HepG2 (cell line): ENCODE measurements at regions of chr15 and their contacts with region 1.

Region 1: GRCh38 chr15:48112242-48112641 is 8.5 kb upstream of the SLC24A5 start:
- DNase-seq: peak; percentile 16
- ATAC-seq: peak; percentile 93
- H3K4me3 ChIP-seq: no peak overlapping the region
- H3K27ac ChIP-seq: no peak overlapping the region
- H3K4me1 ChIP-seq: no peaks in the 10 kb centered on the region
- H3K27me3 ChIP-seq: no peaks in the 10 kb centered on the region
- CTCF ChIP-seq: peak; percentile 72
- EP300 ChIP-seq: no peak
- POLR2A ChIP-seq: no peak
- RAD21 ChIP-seq: no peak

Region 2: DNA sequence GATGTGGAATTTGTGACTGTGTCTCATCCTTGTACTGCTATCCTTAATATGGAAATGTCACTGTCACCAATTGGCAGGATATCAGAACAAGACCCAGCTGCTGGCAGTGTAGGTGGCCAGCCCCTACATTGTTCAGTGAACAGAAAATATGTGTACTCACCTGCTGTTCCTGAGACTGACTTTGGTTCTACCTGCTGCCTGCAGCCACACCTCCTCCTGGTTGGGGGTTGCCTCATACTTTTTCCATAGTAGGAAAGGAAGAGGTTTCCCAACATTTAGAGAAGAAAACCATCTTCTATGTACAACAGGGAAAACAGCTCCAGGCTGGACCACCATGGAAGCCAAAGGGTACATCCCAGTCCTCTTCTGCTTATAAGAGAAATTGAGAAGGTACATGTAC is 129.8 kb after region 1 on chr15:
- CTCF ChIA-PET with region 1: no interaction called
- POLR2A ChIA-PET with region 1: no interaction called
- in situ Hi-C with region 1: no loop called
- intact Hi-C with region 1: loop called (anchors 2 kb)
- DNase-seq: no peak
- ATAC-seq: no peak
- H3K4me3 ChIP-seq: no peak overlapping the region
- H3K27ac ChIP-seq: no peak overlapping the region
- H3K4me1 ChIP-seq: no peaks in the 10 kb centered on the region
- H3K27me3 ChIP-seq: no peaks in the 10 kb centered on the region
- CTCF ChIP-seq: no peak
- EP300 ChIP-seq: no peak
- POLR2A ChIP-seq: no peak
- RAD21 ChIP-seq: no peak

Region 3: GRCh38 chr15:48250640-48251076 is 138.4 kb after region 1 on chr15:
- CTCF ChIA-PET with region 1: interaction called, 4 read pairs
- POLR2A ChIA-PET with region 1: no interaction called
- in situ Hi-C with region 1: no loop called
- intact Hi-C with region 1: loop called (anchors 1 kb)
- DNase-seq: peak; percentile 25
- ATAC-seq: peak; percentile 40; the same call in 1 of the 3 replicates
- H3K4me3 ChIP-seq: no peak overlapping the region
- H3K27ac ChIP-seq: no peak overlapping the region
- H3K4me1 ChIP-seq: no peaks in the 10 kb centered on the region
- H3K27me3 ChIP-seq: 0 out of 5 replicates have a peak, but pooled peaks cover 0 to 1% of the 10 kb centered on the region in 2 experiments
- CTCF ChIP-seq: peak; percentile 51
- EP300 ChIP-seq: no peak
- POLR2A ChIP-seq: no peak
- RAD21 ChIP-seq: no peak

Region 4: DNA sequence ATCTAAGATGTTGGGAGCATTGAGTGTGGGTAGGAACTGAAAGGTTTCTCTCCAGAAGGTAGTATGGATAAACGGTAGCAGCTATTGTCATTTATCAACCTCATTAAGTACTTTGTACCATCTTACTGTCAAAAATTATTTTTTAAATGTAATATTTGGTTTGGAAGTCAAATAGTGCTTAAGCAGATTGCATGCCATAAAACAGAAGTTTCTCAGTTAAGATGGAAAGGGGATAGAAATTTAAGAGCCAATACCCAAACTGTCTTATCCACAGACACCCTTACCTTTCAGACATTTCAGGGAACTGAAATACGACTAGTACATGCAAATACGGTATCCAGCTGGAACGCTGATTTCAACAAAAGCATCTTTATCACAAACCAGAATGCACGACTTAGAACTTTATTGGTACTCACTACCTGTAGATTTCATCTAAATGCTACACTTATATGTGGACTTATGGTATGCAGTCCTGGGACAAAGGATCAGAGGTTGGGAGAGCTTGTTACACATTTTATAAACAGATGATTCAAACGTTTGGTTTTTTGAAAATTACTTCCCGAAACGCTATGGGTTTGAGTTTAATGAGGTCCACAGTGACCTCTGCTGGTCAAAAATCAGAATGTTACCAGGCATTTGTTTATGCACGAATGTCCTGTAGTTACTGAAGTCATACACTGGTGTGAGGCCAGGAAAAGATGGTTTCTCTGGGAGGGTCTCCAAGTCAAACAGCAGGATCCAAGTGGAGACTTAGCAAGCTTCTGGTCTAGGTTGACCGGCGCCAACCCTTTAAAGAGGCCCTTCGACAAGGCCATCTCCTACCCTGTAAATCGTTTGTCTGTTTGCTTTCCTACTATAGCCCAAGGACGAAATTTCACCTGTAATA is 173.3 kb after region 1 on chr15:
- CTCF ChIA-PET with region 1: interaction called, 11 read pairs
- POLR2A ChIA-PET with region 1: no interaction called
- in situ Hi-C with region 1: loop called (anchors 10 kb)
- intact Hi-C with region 1: loop called (anchors 1 kb)
- DNase-seq: peak; percentile 58
- ATAC-seq: peak; percentile 83
- H3K4me3 ChIP-seq: no peak overlapping the region
- H3K27ac ChIP-seq: no peak overlapping the region
- H3K4me1 ChIP-seq: no peaks in the 10 kb centered on the region
- H3K27me3 ChIP-seq: no peaks in the 10 kb centered on the region
- CTCF ChIP-seq: peak; percentile 70
- EP300 ChIP-seq: no peak
- POLR2A ChIP-seq: no peak
- RAD21 ChIP-seq: no peak